ENCODE measurements at regions of chr1 and their contacts with region 1.

Region 1: DNA sequence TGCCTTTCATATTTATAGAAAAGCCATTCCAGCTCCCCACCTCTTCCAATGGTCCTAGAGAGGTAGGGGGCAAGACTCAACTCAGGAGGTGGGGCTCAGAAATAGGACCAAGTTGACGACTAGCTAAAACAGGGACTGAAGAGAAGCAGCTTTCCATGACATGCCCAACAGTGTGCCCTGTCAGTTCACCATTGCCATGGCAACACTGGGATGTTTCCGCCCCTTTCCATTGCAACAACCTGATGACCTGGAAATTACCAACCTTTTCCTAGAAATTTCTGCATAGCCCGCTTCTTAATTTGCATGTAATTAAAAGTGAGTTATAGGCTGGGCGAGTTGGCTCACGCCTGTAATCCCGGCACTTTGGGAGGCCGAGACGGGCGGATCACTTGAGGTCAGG is 22.4 kb upstream of the INTS3 start:
- DNase-seq: no peak
- ATAC-seq: no peak
- H3K4me3 Mint-ChIP-seq: no peak overlapping the region
- H3K27ac Mint-ChIP-seq: no peak overlapping the region
- H3K4me1 Mint-ChIP-seq: no peaks in the 10 kb centered on the region
- H3K27me3 Mint-ChIP-seq: no peaks in the 10 kb centered on the region
- CTCF ChIP-seq: no peak

Region 2: GRCh38 chr1:153742411-153743142 is 37.1 kb after region 1 on chr1:
- CTCF ChIA-PET with region 1: no interaction called
- POLR2A ChIA-PET with region 1: no interaction called
- intact Hi-C with region 1: loop called (anchors 5 kb)
- DNase-seq: peak; percentile 17
- ATAC-seq: peak; percentile 79
- H3K4me3 Mint-ChIP-seq: peak overlapping the region; percentile 55
- H3K27ac Mint-ChIP-seq: peak overlapping the region; percentile 80
- H3K4me1 Mint-ChIP-seq: peaks cover 35% of the 10 kb centered on the region
- H3K27me3 Mint-ChIP-seq: no peaks in the 10 kb centered on the region
- CTCF ChIP-seq: no peak

Region 3: DNA sequence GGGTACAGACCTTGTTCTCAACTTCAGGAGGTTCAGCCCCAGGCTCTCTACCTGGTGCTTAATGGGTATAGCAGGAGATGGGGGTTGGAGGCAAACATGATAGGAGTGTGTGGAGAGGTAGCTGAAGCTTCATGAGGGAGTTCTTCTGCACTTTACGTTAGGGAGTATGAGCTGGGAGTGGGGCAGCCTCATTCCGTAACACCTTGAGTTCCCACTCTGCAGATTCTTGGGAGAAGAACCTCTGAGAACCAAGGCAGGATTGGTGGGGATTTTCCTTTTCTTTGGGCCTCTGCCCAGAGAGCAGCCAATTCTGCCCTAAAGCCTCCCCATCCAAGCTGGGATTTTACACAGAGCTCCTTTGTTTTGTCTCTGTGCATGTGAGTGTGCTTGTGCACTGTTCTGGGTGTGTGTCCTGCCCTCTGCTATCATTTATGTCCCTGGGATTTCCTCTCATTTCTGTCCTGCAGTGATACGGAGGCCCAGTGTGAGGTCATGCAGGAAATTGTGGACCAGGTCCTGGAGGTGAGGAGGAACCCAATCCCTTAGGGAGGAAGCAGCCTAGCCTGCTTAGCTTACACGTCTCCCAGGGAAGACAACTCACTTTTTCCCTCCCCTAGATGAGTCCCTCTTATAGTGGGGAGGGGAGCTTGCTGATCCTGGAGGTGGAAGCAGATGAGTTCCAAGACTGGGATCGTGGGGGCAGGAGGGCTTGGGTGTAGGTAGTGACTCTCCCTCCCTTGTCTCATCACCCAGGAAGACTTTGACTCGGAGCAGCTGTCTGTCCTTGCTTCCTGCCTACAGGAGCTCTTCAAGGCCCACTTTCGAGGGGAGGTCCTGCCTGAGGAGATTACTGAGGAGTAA is 58.1 kb after region 1 on chr1:
- CTCF ChIA-PET with region 1: no interaction called
- POLR2A ChIA-PET with region 1: interaction called, 10 read pairs
- intact Hi-C with region 1: no loop called
- DNase-seq: no peak
- ATAC-seq: no peak
- H3K4me3 Mint-ChIP-seq: no peak overlapping the region
- H3K27ac Mint-ChIP-seq: no peak overlapping the region
- H3K4me1 Mint-ChIP-seq: no peaks in the 10 kb centered on the region
- H3K27me3 Mint-ChIP-seq: no peaks in the 10 kb centered on the region
- CTCF ChIP-seq: no peak